Mammary epithelial cell (primary cell): ENCODE measurements at regions of chr1 and their contacts with region 1.

Region 1: DNA sequence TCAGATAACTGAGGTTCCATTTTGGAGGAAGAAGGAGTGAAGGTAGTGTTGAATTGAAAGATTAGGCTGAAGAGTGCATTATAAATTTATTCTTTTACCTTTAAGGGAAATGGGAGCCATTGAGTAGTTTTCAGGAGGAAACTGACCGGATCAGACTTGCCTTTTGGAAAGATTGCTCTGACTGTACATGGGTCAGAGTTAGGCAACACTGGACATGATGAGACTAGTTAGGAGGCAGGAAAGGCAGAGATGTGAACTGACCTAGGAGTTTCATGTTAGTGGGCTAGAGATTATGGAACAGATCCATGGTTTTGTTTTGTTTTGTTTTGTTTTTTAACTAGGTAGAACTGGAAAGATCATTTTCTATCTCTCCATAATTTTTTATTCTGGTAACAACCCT is 78.2 kb downstream of the SNX7 start:
- DNase-seq: peak; percentile 95
- H3K4me3 ChIP-seq: peak overlapping the region in 2 of 3 experiments; percentile 17 to 22
- H3K27ac ChIP-seq: peak overlapping the region; percentile 89
- H3K4me1 ChIP-seq: peaks cover 16% of the 10 kb centered on the region
- H3K27me3 ChIP-seq: no peaks in the 10 kb centered on the region
- CTCF ChIP-seq: no peak

Region 2: DNA sequence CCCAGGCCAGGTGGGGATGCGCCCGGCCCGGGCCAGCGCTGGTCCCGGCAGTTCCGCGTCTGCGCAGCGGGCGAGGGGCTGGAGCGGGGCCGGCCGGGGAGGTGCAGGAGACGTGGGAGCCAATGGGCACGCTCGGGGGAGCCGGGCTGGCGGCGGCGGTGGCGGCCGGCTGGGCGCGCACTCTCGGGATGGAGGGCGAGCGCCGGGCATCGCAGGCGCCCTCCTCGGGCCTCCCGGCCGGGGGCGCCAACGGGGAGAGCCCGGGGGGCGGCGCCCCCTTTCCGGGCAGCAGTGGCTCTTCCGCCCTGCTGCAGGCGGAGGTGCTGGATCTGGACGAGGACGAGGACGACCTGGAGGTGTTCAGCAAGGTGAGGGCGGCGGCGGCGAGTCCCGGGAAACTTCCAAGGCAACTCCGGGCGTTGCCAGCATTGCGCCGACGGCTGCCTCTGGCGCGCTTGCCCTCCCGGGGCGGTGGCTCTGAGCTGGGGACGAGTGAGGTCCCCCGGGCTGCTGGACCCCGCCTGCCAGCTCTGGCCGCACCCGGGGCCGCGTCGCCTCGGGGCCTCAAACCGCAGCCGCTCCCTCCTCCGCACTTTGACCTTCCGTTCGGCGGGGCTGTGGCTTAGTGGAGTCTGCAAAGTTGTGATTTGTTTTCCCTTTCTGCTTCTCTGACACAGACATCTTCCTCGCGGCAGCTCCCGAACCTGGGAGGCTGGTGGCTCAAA is 78.1 kb before region 1 on chr1 and contains the start of gene SNX7:
- CTCF ChIA-PET with region 1: no interaction called
- dilution Hi-C with region 1: no loop called
- in situ Hi-C with region 1: no loop called
- intact Hi-C with region 1: loop called (anchors 5 kb)
- DNase-seq: peak; percentile 83
- H3K4me3 ChIP-seq: peak within 1 kb of the TSS; percentile 85 to 92 (median 88)
- H3K27ac ChIP-seq: peak within 1 kb of the TSS; percentile 66
- H3K4me1 ChIP-seq: no peaks in the 10 kb centered on the region
- H3K27me3 ChIP-seq: no peaks in the 10 kb centered on the region
- CTCF ChIP-seq: peak in 1 of 2 donors; percentile 16
- total RNA-seq, gene SNX7: 51.2 to 53.0 TPM

Region 3: GRCh38 chr1:99766378-99766800 is 1026.6 kb after region 1 on chr1 and contains the start of gene FRRS1:
- CTCF ChIA-PET with region 1: interaction called, 10 read pairs
- dilution Hi-C with region 1: no loop called
- in situ Hi-C with region 1: no loop called
- intact Hi-C with region 1: no loop called
- DNase-seq: peak; percentile 85
- H3K4me3 ChIP-seq: peak within 1 kb of the TSS; percentile 65 to 83 (median 74)
- H3K27ac ChIP-seq: peak within 1 kb of the TSS; percentile 65
- H3K4me1 ChIP-seq: peaks cover 8% of the 10 kb centered on the region
- H3K27me3 ChIP-seq: no peaks in the 10 kb centered on the region
- CTCF ChIP-seq: no peak
- total RNA-seq, gene FRRS1: 9.9 to 31.0 TPM